Gastrocnemius medialis (tissue), 4 donors: ENCODE measurements at regions of chr3 and their contacts with region 1.

Region 1: DNA sequence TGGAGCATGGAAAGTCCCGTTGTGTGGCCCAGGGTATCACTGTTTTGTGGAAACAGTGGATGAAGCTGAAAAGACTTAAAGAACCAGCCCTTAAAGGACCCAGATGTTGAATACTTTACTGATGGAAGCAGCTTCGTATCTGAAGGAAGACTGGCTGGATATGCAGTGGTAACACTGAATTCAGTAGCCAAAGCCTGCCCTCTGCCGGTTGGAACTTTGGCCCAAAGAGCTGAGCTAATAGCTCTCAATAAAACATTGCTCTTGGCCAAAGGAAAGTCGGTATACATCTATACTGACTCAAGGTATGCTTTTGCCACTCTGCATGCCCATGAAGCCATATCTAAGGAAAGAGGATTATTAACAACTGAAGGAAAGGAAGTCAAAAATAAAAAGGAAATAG is 885.4 kb downstream of the PDCD6IP start:
- DNase-seq: no peak
- ATAC-seq: no peak
- H3K4me3 ChIP-seq: no peak overlapping the region
- H3K27ac ChIP-seq: no peak overlapping the region
- H3K4me1 ChIP-seq: no peaks in the 10 kb centered on the region
- H3K27me3 ChIP-seq: no peaks in the 10 kb centered on the region
- CTCF ChIP-seq: peak in 1 of 5 experiments; percentile 22
- POLR2A ChIP-seq: no peak

Region 2: DNA sequence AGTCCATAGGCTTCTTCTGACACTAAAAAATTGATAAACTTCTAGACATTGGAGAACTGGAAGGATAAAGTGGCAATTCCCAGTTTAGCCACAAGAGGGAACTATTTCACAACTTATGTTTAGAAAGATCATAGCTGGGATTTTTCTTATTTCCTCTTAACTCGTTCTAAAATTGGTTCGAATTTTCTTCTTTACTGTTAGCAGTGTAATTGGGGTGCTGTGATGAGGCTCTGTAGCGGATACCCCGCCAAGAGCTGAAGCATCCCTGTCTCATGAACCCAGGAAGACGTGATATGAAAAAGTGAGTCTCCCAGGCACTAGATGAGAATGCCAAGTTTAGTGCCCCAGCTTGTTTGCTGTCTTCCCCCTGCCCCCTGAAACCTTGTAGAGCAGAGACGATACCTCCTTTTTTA is 800.3 kb before region 1 on chr3:
- in situ Hi-C with region 1: loop called in 3 of 4 experiments (anchors 10 to 25 kb)
- intact Hi-C with region 1: loop called (anchors 5 kb)
- DNase-seq: no peak
- ATAC-seq: peak; percentile 24 to 39
- H3K4me3 ChIP-seq: peak overlapping the region; percentile 11 to 45 (median 36)
- H3K27ac ChIP-seq: peak overlapping the region in 2 of 4 donors; percentile 26 to 45
- H3K4me1 ChIP-seq: peaks cover 12 to 15% of the 10 kb centered on the region in 2 donors
- H3K27me3 ChIP-seq: no peaks in the 10 kb centered on the region
- CTCF ChIP-seq: peak; percentile 58 to 87 (median 82)
- POLR2A ChIP-seq: no peak